H1 (cell line): ENCODE measurements at regions of chr6 and their contacts with region 1.

Region 1: GRCh38 chr6:1424306-1424928 is 35.0 kb downstream of the FOXF2 start:
- DNase-seq: peak; percentile 31 to 68
- H3K4me3 ChIP-seq: no peak overlapping the region
- H3K27ac ChIP-seq: no peak overlapping the region
- H3K4me1 ChIP-seq: peaks cover 0 to 3% (median 0%) of the 10 kb centered on the region in 4 experiments; a peak in 1 of 7 replicates
- H3K27me3 ChIP-seq: peaks cover 0 to 5% (median 0%) of the 10 kb centered on the region in 4 experiments; a peak in 4 of 7 replicates
- CTCF ChIP-seq: peak; percentile 74 to 87 (median 85)
- EP300 ChIP-seq: no peak
- POLR2A ChIP-seq: no peak
- RAD21 ChIP-seq: peak; percentile 70 to 73

Region 2: GRCh38 chr6:1363729-1364572 is 60.5 kb before region 1 on chr6:
- CTCF ChIA-PET with region 1: interaction called, 10 read pairs
- POLR2A ChIA-PET with region 1: no interaction called
- DNase-seq: no peak
- H3K4me3 ChIP-seq: no peak overlapping the region
- H3K27ac ChIP-seq: no peak overlapping the region
- H3K4me1 ChIP-seq: peaks cover 0 to 6% (median 0%) of the 10 kb centered on the region in 4 experiments; a peak in 1 of 7 replicates
- H3K27me3 ChIP-seq: 0 out of 7 replicates have a peak, but pooled peaks cover 0 to 3% (median 1%) of the 10 kb centered on the region in 4 experiments
- CTCF ChIP-seq: peak; percentile 59 to 72 (median 67)
- EP300 ChIP-seq: no peak
- POLR2A ChIP-seq: no peak
- RAD21 ChIP-seq: peak; percentile 72 to 78

Region 3: GRCh38 chr6:1381481-1382330 is 42.7 kb before region 1 on chr6:
- CTCF ChIA-PET with region 1: interaction called, 11 read pairs
- POLR2A ChIA-PET with region 1: no interaction called
- DNase-seq: peak in 1 of 2 experiments; percentile 95
- H3K4me3 ChIP-seq: peak overlapping the region; percentile 1 to 63 (median 22); a peak in 4 of 8 replicates
- H3K27ac ChIP-seq: no peak overlapping the region
- H3K4me1 ChIP-seq: peaks cover 0 to 37% (median 17%) of the 10 kb centered on the region in 4 experiments; a peak in 5 of 7 replicates
- H3K27me3 ChIP-seq: peaks cover 94 to 100% (median 98%) of the 10 kb centered on the region in 4 experiments
- CTCF ChIP-seq: peak in 2 of 3 experiments; percentile 73 to 78; a peak in 3 of 4 replicates
- EP300 ChIP-seq: no peak
- POLR2A ChIP-seq: no peak
- RAD21 ChIP-seq: peak; percentile 75 to 88

Region 4: GRCh38 chr6:1396952-1397868 is 27.2 kb before region 1 on chr6:
- CTCF ChIA-PET with region 1: interaction called, 20 read pairs
- POLR2A ChIA-PET with region 1: no interaction called
- DNase-seq: peak in 1 of 2 experiments; percentile 82
- H3K4me3 ChIP-seq: no peak overlapping the region
- H3K27ac ChIP-seq: no peak overlapping the region
- H3K4me1 ChIP-seq: peaks cover 0 to 15% (median 5%) of the 10 kb centered on the region in 4 experiments; a peak in 5 of 7 replicates
- H3K27me3 ChIP-seq: peaks cover 59 to 80% (median 70%) of the 10 kb centered on the region in 4 experiments
- CTCF ChIP-seq: peak; percentile 83 to 92 (median 92)
- EP300 ChIP-seq: no peak
- POLR2A ChIP-seq: no peak
- RAD21 ChIP-seq: peak; percentile 75 to 83

Region 5: GRCh38 chr6:1406306-1407072 is 17.9 kb before region 1 on chr6:
- CTCF ChIA-PET with region 1: interaction called, 101 read pairs
- POLR2A ChIA-PET with region 1: interaction called, 4 read pairs
- DNase-seq: no peak
- H3K4me3 ChIP-seq: no peak overlapping the region
- H3K27ac ChIP-seq: no peak overlapping the region
- H3K4me1 ChIP-seq: peaks cover 4 to 11% (median 6%) of the 10 kb centered on the region in 4 experiments
- H3K27me3 ChIP-seq: peaks cover 0 to 3% (median 0%) of the 10 kb centered on the region in 4 experiments; a peak in 1 of 7 replicates
- CTCF ChIP-seq: no peak
- EP300 ChIP-seq: no peak
- POLR2A ChIP-seq: no peak
- RAD21 ChIP-seq: no peak

Region 6: DNA sequence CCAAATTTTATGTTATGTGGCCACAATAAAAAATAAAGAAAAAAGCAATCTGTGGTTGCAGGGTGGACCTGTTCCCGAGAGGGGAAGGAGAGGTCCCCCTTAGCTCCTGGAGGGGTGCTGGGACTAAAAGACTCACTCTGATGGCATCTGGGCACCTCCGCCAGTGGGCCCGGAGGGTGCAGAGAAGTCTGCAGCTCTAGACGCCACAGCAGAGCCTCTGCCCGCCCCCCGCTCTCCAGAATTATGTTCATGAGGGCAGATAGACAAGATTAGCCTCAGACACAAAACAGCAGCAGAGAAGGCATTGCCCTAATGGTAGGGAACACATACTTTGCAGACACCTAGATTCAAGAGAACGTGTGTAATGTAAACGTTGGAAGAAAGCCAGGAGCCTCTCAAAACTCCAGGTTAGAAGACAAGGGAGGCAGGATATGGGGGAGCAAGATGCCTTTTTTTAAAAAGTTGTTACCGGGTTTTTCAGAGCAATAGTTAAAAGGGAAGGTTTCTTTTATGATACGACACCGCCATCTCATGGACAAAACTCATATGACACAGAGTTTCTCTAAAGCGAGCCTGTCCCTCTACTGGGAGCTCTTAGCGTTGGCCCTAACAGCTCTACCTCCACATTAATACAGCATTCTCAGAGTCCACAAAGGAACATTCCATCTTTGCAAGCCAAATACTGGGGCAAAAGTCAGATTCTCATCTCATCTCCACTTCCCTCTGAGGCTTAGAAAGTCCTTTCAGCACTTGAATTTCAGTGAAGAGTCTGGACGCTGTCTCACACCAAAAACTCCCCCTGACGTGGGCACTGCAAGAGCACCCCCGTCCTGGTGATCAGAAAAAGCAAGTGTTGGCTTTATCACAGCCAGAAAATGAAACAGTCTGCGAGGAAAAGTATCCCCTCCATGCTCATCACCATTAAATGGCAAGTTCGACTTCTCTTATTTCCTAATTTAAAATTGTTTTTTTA is 12.2 kb after region 1 on chr6:
- CTCF ChIA-PET with region 1: interaction called, 56 read pairs
- POLR2A ChIA-PET with region 1: no interaction called
- DNase-seq: peak in 1 of 2 experiments; percentile 85
- H3K4me3 ChIP-seq: no peak overlapping the region
- H3K27ac ChIP-seq: no peak overlapping the region
- H3K4me1 ChIP-seq: peaks cover 0 to 3% (median 1%) of the 10 kb centered on the region in 4 experiments; a peak in 3 of 7 replicates
- H3K27me3 ChIP-seq: no peaks in the 10 kb centered on the region; a peak in 3 of 7 replicates
- CTCF ChIP-seq: peak in 2 of 3 experiments; percentile 79 to 98; a peak in 3 of 4 replicates
- EP300 ChIP-seq: no peak
- POLR2A ChIP-seq: no peak
- RAD21 ChIP-seq: peak; percentile 87 to 89

Region 7: GRCh38 chr6:1482381-1483166 is 58.2 kb after region 1 on chr6:
- CTCF ChIA-PET with region 1: no interaction called
- POLR2A ChIA-PET with region 1: no interaction called
- DNase-seq: no peak
- H3K4me3 ChIP-seq: no peak overlapping the region
- H3K27ac ChIP-seq: no peak overlapping the region
- H3K4me1 ChIP-seq: no peaks in the 10 kb centered on the region; a peak in 1 of 7 replicates
- H3K27me3 ChIP-seq: no peaks in the 10 kb centered on the region
- CTCF ChIP-seq: no peak
- EP300 ChIP-seq: no peak
- POLR2A ChIP-seq: no peak
- RAD21 ChIP-seq: no peak